Heart left ventricle (tissue), 16 donors: ENCODE measurements at regions of chr2 and their contacts with region 1.

Region 1: DNA sequence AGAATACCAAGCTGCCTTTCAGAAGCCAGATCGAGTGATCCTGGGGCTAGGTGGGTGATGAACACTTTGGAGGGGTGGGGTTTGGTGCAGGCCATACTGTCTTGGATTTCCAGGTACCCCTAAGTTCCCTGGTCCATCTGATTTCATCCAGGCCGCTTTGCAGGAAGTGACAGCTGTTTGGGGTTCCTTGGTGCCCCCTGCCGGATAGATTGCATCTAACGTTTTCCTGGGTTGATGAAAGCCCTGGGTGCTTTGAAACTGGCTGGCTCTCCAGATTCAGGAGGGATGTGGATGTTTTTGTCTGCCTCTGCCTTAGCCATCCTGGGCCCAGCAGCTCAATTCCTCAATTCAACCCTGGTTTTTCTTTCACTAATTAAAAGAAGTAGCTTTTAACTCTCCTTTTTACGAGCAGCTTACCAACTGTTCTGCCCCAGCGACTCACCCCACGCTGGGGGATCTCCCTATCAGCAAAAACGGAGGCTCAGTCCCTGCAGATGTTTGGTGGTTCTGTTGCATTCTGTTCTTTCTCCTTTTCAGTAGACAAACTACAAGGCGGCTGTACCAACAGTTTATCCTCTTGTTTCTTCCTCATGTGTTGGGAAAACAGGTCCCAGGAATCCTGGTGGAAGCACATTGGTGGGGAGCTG is 37.1 kb downstream of the ARHGEF4 start:
- DNase-seq: peak in 4 of 5 donors; percentile 57 to 72 (median 64)
- ATAC-seq: peak; percentile 50 to 74 (median 67)
- H3K4me3 ChIP-seq: no peak overlapping the region
- H3K27ac ChIP-seq: no peak overlapping the region
- H3K4me1 ChIP-seq: no peaks in the 10 kb centered on the region
- H3K27me3 ChIP-seq: peaks cover 0 to 11% (median 5%) of the 10 kb centered on the region in 9 donors
- CTCF ChIP-seq: peak; percentile 33 to 70 (median 59)
- POLR2A ChIP-seq: no peak

Region 2: GRCh38 chr2:129857200-129857599 is 1016.6 kb before region 1 on chr2:
- intact Hi-C with region 1: no loop called
- DNase-seq: peak in 1 of 5 donors; percentile 49
- ATAC-seq: peak; percentile 61 to 90 (median 77)
- H3K4me3 ChIP-seq: no peak overlapping the region
- H3K27ac ChIP-seq: no peak overlapping the region
- H3K4me1 ChIP-seq: no peaks in the 10 kb centered on the region
- H3K27me3 ChIP-seq: no peaks in the 10 kb centered on the region
- CTCF ChIP-seq: no peak
- POLR2A ChIP-seq: no peak

Region 3: DNA sequence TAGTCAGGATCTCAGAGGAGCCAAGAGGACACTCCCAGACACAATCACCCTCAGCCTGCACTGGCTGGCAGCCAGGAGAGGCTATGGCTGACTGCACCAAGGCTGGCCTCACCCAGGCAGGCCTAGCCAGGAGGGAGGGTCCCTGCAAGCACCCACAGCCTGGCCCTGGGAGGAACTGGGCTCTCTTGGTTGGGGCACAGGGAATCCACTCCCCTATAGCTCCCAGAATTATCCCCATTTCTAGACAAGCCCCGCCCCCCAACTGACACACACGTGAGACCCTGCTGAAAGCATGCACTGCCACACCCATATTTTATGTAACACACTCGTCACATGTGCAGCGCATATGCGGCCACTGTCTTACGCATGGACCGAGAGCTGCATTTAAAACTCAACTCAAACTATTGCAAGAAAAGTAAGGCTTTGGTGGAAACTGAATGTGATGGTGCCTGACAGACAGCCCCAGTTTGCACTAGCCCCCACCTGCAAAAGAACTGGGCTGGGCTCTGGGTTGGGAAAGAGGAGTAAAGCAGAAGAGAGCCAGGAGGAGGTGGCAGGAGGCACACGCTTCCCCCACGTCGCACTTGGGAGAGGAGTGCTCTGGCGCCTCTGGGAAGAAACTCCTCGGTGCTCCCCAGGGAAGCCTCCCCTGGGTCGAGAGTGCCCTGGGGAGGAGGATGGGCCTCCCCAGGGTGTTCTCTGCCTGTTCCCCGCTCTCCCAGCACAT is 66.0 kb before region 1 on chr2:
- intact Hi-C with region 1: loop called in 1 of 10 experiments (anchors 2 kb)
- DNase-seq: peak in 1 of 5 donors; percentile 27
- ATAC-seq: no peak
- H3K4me3 ChIP-seq: no peak overlapping the region
- H3K27ac ChIP-seq: no peak overlapping the region
- H3K4me1 ChIP-seq: no peaks in the 10 kb centered on the region
- H3K27me3 ChIP-seq: no peaks in the 10 kb centered on the region
- CTCF ChIP-seq: no peak
- POLR2A ChIP-seq: no peak

Region 4: DNA sequence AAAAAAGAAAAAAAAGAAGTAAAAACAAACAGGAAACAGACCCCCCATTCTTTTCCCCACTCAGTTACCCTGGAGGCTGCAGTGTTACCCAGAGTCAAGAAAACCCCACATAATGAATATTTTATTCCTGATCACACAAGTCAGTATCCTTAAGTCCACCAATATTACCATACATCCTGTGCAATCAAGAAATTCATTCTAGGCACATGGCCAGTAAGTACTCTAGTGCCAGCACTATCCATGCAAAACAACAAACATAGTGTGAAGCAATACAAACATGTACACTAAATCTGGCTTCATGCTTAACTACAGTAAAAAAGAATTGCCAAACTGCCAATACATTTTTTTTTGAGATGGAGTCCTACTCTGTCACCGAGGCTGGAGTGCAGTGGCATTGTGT is 107.8 kb after region 1 on chr2:
- intact Hi-C with region 1: no loop called
- DNase-seq: no peak
- ATAC-seq: no peak
- H3K4me3 ChIP-seq: no peak overlapping the region
- H3K27ac ChIP-seq: no peak overlapping the region
- H3K4me1 ChIP-seq: peaks cover 0 to 17% (median 0%) of the 10 kb centered on the region in 12 donors
- H3K27me3 ChIP-seq: no peaks in the 10 kb centered on the region
- CTCF ChIP-seq: no peak
- POLR2A ChIP-seq: no peak